Heart right ventricle (tissue), 16 donors: ENCODE measurements at regions of chr18 and their contacts with region 1.

Region 1: DNA sequence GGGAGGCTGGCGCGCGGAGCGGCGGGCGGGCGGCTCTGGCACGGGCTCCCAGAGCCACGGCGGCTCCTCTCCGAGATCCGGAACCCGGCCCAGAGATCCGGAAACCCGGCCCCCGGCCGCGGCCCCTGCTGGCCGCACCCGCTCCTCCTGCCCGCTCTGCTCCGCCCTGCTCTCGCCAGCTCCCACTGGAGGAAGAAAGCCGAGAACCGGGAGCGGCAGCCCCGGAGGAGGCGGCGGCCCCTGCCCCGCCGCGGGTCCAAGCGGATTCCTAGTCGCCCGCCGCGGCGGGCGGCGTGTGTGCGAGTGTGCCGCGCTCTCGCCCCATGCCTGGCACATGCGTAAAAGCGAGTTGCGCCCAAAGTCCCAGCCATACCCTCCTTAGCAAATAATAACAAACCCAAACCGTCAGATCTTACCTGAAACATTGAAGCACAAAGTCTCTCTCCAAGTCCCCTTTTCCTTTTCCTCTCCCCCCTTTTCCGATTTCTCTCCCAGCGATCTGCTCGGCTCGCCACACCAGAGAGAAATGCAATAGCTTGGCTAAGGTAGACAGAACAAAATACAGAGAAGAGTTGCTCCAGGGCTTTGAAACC is 108.7 kb upstream of the KCTD1 start:
- DNase-seq: peak; percentile 74 to 86
- ATAC-seq: peak; percentile 81 to 95 (median 86)
- H3K4me3 ChIP-seq: peak overlapping the region; percentile 60 to 85 (median 78)
- H3K27ac ChIP-seq: peak overlapping the region; percentile 81 to 95 (median 86)
- H3K4me1 ChIP-seq: peaks cover 2 to 27% (median 18%) of the 10 kb centered on the region in 9 donors
- H3K27me3 ChIP-seq: peaks cover 0 to 72% (median 6%) of the 10 kb centered on the region in 7 donors
- CTCF ChIP-seq: peak in 7 of 9 donors; percentile 15 to 67 (median 46)

Region 2: DNA sequence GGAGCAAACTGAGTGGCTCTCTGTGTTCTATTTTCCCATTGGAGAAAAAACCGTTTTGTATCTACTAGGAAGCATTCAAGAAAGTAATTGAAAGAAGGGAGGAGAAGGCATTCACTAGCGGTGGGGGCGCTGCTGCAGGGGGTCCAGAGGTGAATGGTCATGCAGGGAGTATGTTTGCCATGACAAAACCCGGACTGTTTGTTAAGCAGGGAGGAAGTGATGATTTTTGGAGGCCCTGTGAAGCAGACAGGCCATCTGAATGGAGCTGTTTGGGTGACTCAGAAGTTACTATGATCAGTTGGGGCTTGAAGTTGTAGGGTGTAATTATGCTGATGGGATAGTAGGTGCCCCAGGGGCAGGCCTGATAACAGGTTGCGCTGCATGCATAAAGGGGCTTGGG is 423.8 kb before region 1 on chr18:
- intact Hi-C with region 1: loop called in 1 of 10 experiments (anchors 10 kb)
- DNase-seq: no peak
- ATAC-seq: no peak
- H3K4me3 ChIP-seq: no peak overlapping the region
- H3K27ac ChIP-seq: no peak overlapping the region
- H3K4me1 ChIP-seq: peaks cover 0 to 6% (median 0%) of the 10 kb centered on the region in 9 donors
- H3K27me3 ChIP-seq: no peaks in the 10 kb centered on the region
- CTCF ChIP-seq: no peak

Region 3: GRCh38 chr18:26307189-26307773 is 349.8 kb before region 1 on chr18:
- intact Hi-C with region 1: loop called in 1 of 10 experiments (anchors 10 kb)
- DNase-seq: peak in 1 of 2 donors; percentile 8
- ATAC-seq: no peak
- H3K4me3 ChIP-seq: no peak overlapping the region
- H3K27ac ChIP-seq: no peak overlapping the region
- H3K4me1 ChIP-seq: no peaks in the 10 kb centered on the region
- H3K27me3 ChIP-seq: no peaks in the 10 kb centered on the region
- CTCF ChIP-seq: peak; percentile 25 to 72 (median 60)

Region 4: DNA sequence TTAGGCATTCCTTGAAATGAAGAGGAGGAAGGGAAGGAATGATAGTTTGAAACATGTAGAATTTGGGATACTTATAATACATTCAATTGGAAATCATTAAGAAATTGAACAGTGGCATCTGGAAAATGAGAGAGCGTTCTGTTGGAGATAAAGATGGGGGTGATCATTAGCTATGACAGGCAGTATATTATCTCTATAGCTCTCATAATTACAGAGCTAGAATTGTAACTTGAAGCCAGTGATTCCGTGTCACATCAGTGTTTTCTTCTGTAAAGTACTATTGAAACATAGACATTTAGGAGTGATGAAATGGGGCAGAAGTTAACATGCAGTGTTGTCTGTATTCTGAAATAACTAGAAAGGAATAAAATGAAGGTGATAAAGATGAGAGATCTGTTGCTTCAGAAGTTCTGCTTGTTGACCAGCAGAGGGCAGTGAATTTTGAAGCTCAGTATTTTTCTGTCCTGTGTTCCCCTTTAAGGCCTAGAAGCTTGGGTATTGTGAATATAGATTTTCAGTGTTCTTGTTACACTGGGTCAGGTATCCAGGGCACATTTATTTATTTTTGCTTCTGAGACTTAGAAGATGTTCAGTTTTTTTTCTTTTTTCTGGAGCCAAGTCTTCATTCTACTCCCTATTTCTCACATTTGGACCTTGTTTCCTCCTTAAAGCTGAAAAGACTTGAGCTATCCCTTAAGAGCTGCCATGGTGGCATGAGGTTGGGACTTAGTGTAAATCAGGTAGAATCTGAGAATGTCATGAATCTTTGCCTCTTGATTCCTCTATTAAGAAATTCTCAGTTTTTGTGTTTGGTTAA is 273.4 kb before region 1 on chr18:
- intact Hi-C with region 1: loop called in 4 of 10 experiments (anchors 5 kb)
- DNase-seq: no peak
- ATAC-seq: peak in 3 of 8 donors; percentile 47 to 56 (median 49)
- H3K4me3 ChIP-seq: no peak overlapping the region
- H3K27ac ChIP-seq: no peak overlapping the region
- H3K4me1 ChIP-seq: peaks cover 0 to 21% (median 10%) of the 10 kb centered on the region in 9 donors
- H3K27me3 ChIP-seq: no peaks in the 10 kb centered on the region
- CTCF ChIP-seq: peak; percentile 58 to 85 (median 77)

Region 5: DNA sequence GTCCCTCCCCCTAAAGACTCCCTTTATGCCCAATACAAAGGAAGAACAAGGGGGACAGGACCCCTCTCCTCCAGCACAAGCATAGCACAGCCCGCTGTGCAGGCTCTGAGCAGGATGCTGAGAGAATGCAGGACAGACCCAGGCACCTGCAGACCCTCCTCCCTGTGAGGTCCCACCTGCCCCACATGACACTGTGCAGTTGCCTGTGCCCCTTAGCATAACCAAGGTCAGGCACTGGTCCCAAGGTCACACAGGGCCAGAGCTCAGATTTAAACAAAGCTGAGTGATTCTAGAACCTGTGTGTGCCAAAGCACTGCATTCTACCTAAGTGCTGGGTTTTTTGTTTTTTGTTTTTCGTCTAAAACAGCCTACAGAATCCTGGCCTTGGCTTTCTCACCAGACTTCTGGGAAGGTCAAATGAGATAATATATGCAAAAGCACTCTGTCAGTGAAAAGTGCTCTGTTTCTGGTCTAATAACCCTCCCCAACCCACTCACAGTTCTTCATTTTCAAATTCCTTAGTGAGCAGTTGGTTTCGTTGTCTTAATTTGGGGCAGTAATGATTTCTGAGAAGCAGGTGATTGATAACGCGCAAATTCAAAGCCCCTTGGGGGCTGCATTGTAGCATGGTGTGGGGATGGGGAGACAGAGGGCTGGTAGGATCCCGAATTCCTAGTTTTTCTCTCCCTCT is 234.4 kb before region 1 on chr18:
- intact Hi-C with region 1: no loop called
- DNase-seq: no peak
- ATAC-seq: no peak
- H3K4me3 ChIP-seq: no peak overlapping the region
- H3K27ac ChIP-seq: no peak overlapping the region
- H3K4me1 ChIP-seq: no peaks in the 10 kb centered on the region
- H3K27me3 ChIP-seq: no peaks in the 10 kb centered on the region
- CTCF ChIP-seq: no peak

Region 6: DNA sequence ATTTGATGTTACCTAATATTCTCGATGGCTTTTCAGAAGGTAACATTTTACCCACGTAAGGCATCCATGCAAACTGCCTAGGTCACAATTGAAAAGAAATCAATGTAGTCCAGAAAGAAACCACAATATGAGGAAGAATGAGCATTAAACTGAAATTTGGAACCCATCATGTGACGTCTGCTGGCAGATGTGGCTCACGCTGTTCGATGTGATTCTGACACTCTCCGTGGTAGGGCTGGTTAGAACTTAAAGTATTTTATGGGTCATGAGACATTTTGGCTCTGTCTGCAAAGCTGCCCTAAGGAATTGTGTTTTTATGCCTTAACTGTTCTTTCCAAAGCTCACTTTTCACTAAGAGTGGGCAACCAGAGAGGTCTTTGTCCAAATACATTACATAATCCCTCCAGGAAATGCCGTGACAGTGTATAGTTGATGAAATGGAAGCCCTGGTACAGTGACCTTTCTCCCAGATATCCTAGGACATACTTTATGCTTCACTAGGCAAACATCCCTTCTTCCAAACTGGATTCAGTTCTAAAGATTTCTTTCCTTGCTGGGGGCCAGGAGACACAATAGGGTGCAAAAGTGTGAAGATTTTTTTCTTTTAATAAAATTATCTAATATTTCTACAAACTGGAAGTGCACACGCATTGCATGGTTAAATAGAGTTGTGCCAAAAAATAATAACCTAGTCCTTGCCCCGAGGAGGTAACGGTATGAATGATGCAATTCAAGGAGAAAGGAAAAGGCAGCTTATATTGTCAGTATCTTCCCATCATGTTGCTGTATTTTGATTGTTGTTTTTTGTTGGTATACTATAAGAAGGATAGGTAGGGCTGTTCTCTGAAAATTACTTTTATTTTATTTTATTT is 89.5 kb after region 1 on chr18:
- intact Hi-C with region 1: loop called in 3 of 10 experiments (anchors 5 to 10 kb)
- DNase-seq: no peak
- ATAC-seq: peak in 3 of 8 donors; percentile 39 to 72 (median 65)
- H3K4me3 ChIP-seq: peak overlapping the region in 2 of 10 donors; percentile 3 to 14
- H3K27ac ChIP-seq: no peak overlapping the region
- H3K4me1 ChIP-seq: peaks cover 0 to 12% (median 6%) of the 10 kb centered on the region in 9 donors
- H3K27me3 ChIP-seq: no peaks in the 10 kb centered on the region
- CTCF ChIP-seq: no peak

Region 7: GRCh38 chr18:27964811-27965210 is 1307.8 kb after region 1 on chr18:
- intact Hi-C with region 1: loop called in 1 of 10 experiments (anchors 10 kb)
- DNase-seq: no peak
- ATAC-seq: no peak
- H3K4me3 ChIP-seq: no peak overlapping the region
- H3K27ac ChIP-seq: no peak overlapping the region
- H3K4me1 ChIP-seq: peaks cover 0 to 37% (median 0%) of the 10 kb centered on the region in 9 donors
- H3K27me3 ChIP-seq: no peaks in the 10 kb centered on the region
- CTCF ChIP-seq: no peak